ENCODE measurements at regions of chr12 and their contacts with region 1.

Region 1: DNA sequence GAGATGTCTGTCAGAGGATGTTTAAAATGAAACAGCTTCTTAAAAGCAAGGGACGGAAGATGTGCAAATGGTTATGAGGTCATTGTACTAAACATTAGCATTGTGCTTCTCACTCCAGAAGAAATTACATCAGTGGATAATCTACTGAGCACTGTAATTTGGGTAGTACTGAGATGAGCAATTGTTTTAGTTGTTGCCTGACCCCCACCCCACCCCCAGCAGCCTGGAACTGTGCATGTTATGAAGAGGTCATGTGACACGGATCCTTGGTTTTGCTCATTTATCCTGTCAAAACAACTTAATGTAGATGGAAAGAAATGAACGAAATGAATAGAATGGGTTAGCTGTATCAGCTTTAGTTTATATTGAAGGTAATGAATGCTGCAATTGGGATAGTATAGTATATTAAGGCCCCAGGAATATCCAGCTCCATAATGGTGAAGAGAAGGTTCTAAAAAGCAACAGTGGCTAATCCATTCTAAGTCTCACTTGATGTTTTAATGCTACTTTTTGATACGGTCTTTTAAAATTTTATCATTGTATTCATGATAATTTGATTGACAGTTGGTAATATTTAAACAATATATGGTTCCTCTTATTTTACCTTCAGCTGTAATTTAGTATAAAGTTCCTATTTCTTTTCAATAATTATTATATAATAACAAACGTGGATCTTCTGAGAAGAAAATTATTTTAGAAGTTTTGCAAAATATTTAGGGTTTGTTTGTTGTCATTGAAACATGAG is 58.5 kb downstream of the WNK1 start:
- DNase-seq: no peak
- ATAC-seq: no peak
- H3K4me3 ChIP-seq: no peak overlapping the region
- H3K27ac ChIP-seq: peak overlapping the region in 3 of 4 donors; percentile 31 to 81 (median 44)
- H3K4me1 ChIP-seq: peaks cover 46 to 54% of the 10 kb centered on the region in 2 donors
- H3K27me3 ChIP-seq: no peaks in the 10 kb centered on the region
- CTCF ChIP-seq: no peak
- POLR2A ChIP-seq: no peak

Region 2: GRCh38 chr12:484117-484516 is 326.7 kb before region 1 on chr12:
- in situ Hi-C with region 1: no loop called
- intact Hi-C with region 1: no loop called
- DNase-seq: no peak
- ATAC-seq: no peak
- H3K4me3 ChIP-seq: no peak overlapping the region
- H3K27ac ChIP-seq: no peak overlapping the region
- H3K4me1 ChIP-seq: peaks cover 14 to 15% of the 10 kb centered on the region in 2 donors
- H3K27me3 ChIP-seq: no peaks in the 10 kb centered on the region
- CTCF ChIP-seq: no peak
- POLR2A ChIP-seq: no peak

Region 3: DNA sequence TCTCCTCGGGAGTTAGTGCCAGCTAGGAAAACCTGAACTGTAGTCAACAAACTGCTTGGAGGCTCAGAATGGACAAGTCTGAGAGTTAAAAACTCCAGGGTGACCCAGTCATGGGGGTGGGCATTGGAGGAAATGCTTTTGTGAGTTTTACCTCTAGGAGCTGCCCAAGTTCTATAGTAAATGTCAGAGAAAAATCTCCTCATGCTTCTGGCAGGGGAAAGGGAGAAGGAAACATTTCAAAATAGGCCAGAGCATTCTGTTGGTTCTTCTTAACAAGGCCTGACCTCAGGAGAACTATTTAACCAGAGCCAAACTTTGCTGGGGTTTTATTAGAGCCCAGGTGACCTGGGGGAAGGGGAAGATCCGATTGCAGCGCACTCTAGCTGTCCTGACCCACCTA is 159.9 kb before region 1 on chr12:
- in situ Hi-C with region 1: no loop called
- intact Hi-C with region 1: loop called (anchors 2 kb)
- DNase-seq: peak in 1 of 2 donors; percentile 44
- ATAC-seq: peak; percentile 37 to 69
- H3K4me3 ChIP-seq: no peak overlapping the region
- H3K27ac ChIP-seq: peak overlapping the region; percentile 68 to 77 (median 69)
- H3K4me1 ChIP-seq: peaks cover 31 to 34% of the 10 kb centered on the region in 2 donors
- H3K27me3 ChIP-seq: no peaks in the 10 kb centered on the region
- CTCF ChIP-seq: peak in 2 of 5 experiments; percentile 13 to 24
- POLR2A ChIP-seq: no peak

Region 4: GRCh38 chr12:779745-780734 is 30.8 kb before region 1 on chr12:
- in situ Hi-C with region 1: no loop called
- intact Hi-C with region 1: loop called (anchors 5 kb)
- DNase-seq: no peak
- ATAC-seq: peak in 1 of 2 donors; percentile 33
- H3K4me3 ChIP-seq: peak overlapping the region in 2 of 4 donors; percentile 17 to 19
- H3K27ac ChIP-seq: peak overlapping the region; percentile 38 to 52 (median 49)
- H3K4me1 ChIP-seq: peaks cover 55 to 65% of the 10 kb centered on the region in 2 donors
- H3K27me3 ChIP-seq: no peaks in the 10 kb centered on the region
- CTCF ChIP-seq: no peak
- POLR2A ChIP-seq: no peak